Activated CD4-positive, alpha-beta T cell treated with anti-CD3 and anti-CD28 coated beads, Interleukin-2, amount 10 ng/mL, durations not matched to agents 24 days and 14 days (primary cell): ENCODE measurements at regions of chr11 and their contacts with region 1.

Region 1: DNA sequence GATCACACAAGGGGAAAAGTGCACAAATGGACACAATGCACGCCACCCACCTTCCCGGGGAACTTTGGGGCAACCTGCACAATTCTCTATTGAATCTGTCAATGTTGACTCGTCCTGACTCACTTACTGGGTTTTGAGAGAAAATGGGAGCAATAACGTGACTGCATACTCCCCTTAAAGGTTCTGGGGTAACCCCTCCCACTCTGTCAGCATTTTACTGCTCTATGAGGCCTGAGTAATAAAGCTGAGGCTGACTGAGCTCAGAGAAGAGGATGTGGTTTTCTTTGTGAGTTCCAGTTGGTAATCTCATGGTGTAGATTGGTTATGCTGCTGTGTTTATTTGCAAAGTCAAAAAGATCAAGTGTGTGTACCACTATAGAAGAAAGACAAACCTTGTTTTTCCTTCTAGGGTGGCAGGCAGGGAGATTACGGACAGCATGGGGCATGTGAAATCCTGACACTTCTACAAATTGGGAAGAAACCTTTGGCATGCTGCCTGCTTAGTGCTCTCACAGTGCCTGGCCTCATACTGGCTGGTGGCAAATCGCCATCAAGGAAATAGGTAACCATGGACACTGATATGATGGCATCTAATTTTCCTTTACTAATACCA is 16.1 kb upstream of the APOA1 start:
- DNase-seq: peak; percentile 92
- H3K4me3 Mint-ChIP-seq: peak overlapping the region; percentile 72
- H3K27ac Mint-ChIP-seq: peak overlapping the region; percentile 93
- H3K4me1 Mint-ChIP-seq: peaks cover 60% of the 10 kb centered on the region
- H3K27me3 Mint-ChIP-seq: no peaks in the 10 kb centered on the region

Region 2: GRCh38 chr11:116580799-116581198 is 272.8 kb before region 1 on chr11:
- intact Hi-C with region 1: no loop called
- DNase-seq: no peak
- H3K4me3 Mint-ChIP-seq: no peak overlapping the region
- H3K27ac Mint-ChIP-seq: no peak overlapping the region
- H3K4me1 Mint-ChIP-seq: no peaks in the 10 kb centered on the region
- H3K27me3 Mint-ChIP-seq: peaks cover 58% of the 10 kb centered on the region

Region 3: DNA sequence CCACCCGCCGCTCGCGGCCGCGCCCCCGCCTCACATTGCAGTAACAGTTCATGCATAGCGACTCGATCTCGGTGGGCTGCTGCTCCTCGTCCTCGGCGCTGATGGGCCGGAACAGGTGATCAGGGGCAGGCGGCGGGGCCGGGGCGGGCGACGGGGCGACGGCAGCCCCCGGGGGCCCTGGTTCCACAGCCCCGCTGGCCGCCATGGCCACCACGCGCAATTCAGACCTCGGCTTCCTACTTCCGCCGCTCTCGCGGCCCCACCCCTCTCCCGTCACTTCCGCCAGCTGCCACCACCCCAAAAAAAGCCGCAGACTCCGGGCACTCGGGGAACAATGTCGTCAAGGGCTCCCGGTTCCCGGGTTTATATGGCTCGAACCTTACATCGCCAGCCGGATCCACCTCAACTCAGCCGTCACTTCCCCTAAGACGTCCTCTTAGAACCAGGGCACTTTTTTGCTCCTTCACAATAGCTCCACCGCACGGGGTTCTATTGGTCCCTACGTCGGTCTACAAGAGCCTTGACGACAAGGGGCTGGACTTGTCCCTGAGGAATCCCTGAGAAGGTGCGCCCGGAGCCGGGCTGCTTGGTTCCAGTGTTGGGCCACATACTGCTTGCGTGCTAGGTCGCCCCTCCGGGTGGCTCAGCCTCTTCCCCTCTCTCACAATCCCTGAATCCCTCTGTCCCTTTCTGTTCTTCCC is 65.6 kb before region 1 on chr11 and contains the start of gene ZPR1:
- intact Hi-C with region 1: loop called (anchors 2 kb)
- DNase-seq: peak; percentile 97
- H3K4me3 Mint-ChIP-seq: peak within 1 kb of the TSS; percentile 97
- H3K27ac Mint-ChIP-seq: peak within 1 kb of the TSS; percentile 87
- H3K4me1 Mint-ChIP-seq: peaks cover 44% of the 10 kb centered on the region
- H3K27me3 Mint-ChIP-seq: peaks cover 2% of the 10 kb centered on the region
- total RNA-seq, gene ZPR1: 105 and 106 TPM in 2 replicates

Region 4: DNA sequence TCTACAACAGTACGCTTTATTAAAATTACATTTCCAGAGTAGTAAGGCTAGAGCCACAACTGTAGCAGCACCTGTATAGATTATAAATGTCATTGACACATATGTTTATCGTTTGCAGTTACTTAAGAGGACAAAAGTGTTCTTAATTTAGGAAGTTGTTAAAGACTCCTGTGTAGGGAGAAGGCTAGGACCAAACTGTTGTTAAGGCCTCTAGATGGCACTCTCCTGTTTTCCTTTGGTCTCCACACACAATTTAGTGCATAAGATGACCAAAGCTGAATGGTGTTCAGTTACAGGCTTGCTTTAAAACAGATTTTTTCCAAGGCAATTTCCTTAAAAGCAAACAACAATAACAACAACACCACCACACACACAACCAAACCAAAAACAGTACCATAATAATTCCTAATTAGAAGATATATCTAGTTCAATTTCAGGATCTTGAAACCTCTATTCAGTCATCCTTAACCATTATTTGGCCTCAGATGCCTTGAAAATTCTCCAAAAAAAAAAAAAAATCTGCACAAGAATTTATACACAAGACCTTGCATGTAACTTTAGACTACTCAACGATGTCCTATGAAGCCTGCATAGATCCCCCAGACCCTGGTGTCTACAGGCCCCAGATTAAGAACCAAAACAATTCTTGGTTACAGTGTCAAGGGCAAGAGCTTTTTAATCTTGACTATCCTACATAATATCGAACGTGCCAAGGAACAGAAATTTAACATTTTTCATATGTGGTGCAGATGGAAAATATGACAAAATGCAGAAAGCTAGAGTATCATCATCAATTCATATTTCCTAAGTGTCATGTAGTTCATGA is 26.4 kb after region 1 on chr11:
- intact Hi-C with region 1: loop called (anchors 2 kb)
- DNase-seq: peak; percentile 80
- H3K4me3 Mint-ChIP-seq: no peak overlapping the region
- H3K27ac Mint-ChIP-seq: no peak overlapping the region
- H3K4me1 Mint-ChIP-seq: peaks cover 15% of the 10 kb centered on the region
- H3K27me3 Mint-ChIP-seq: no peaks in the 10 kb centered on the region

Region 5: DNA sequence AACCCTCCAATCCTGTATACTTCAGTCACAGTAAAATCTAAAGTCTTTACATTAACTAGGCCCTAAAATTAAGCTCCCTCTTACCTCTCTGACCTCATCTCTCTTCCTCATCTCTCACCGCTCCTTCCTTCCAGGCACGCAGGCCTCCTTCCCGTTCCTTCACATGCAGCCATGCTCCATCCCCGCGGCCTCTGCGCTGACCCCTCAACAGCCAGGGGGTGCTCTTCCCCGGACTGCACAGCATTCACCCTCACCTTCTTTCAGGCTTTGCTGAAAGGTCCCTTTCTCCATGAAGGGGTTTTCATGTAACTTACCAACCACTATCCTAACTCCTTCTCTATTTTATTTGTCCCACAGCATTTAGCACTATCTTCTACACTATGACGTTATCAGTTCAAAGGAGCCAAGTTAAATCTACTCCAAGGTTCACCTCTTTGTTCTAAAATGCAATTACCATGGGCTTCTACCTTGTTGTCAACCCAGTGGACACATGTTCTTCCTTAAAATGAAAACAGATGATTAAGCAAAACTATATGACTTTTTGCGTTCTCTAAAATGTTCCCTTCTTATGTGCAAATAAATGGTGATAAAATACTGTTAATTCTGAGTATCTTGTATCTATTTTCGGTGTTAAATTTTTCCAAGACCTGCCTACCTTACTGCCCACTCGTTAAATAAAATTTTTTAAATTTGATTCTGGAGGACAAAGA is 41.6 kb after region 1 on chr11:
- intact Hi-C with region 1: no loop called
- DNase-seq: peak; percentile 63
- H3K4me3 Mint-ChIP-seq: no peak overlapping the region
- H3K27ac Mint-ChIP-seq: peak overlapping the region; percentile 25
- H3K4me1 Mint-ChIP-seq: peaks cover 7% of the 10 kb centered on the region
- H3K27me3 Mint-ChIP-seq: no peaks in the 10 kb centered on the region

Region 6: GRCh38 chr11:116986521-116987105 is 133.0 kb after region 1 on chr11:
- intact Hi-C with region 1: loop called (anchors 1 kb)
- DNase-seq: peak; percentile 76
- H3K4me3 Mint-ChIP-seq: peak overlapping the region; percentile 66
- H3K27ac Mint-ChIP-seq: peak overlapping the region; percentile 86
- H3K4me1 Mint-ChIP-seq: peaks cover 56% of the 10 kb centered on the region
- H3K27me3 Mint-ChIP-seq: no peaks in the 10 kb centered on the region

Region 7: GRCh38 chr11:117058761-117059261 is 205.2 kb after region 1 on chr11:
- intact Hi-C with region 1: loop called (anchors 2 kb)
- DNase-seq: no peak
- H3K4me3 Mint-ChIP-seq: no peak overlapping the region
- H3K27ac Mint-ChIP-seq: no peak overlapping the region
- H3K4me1 Mint-ChIP-seq: peaks cover 40% of the 10 kb centered on the region
- H3K27me3 Mint-ChIP-seq: no peaks in the 10 kb centered on the region

Region 8: GRCh38 chr11:117098269-117099232 is 245.0 kb after region 1 on chr11 and contains the start of gene SIK3:
- intact Hi-C with region 1: loop called (anchors 2 kb)
- DNase-seq: peak; percentile 98
- H3K4me3 Mint-ChIP-seq: peak within 1 kb of the TSS; percentile 98
- H3K27ac Mint-ChIP-seq: peak within 1 kb of the TSS; percentile 98
- H3K4me1 Mint-ChIP-seq: peaks cover 42% of the 10 kb centered on the region
- H3K27me3 Mint-ChIP-seq: peaks cover 2% of the 10 kb centered on the region
- total RNA-seq, gene SIK3: 38.4 and 38.7 TPM in 2 replicates

Region 9: GRCh38 chr11:117273550-117274289 is 420.2 kb after region 1 on chr11:
- intact Hi-C with region 1: no loop called
- DNase-seq: no peak
- H3K4me3 Mint-ChIP-seq: no peak overlapping the region
- H3K27ac Mint-ChIP-seq: no peak overlapping the region
- H3K4me1 Mint-ChIP-seq: no peaks in the 10 kb centered on the region
- H3K27me3 Mint-ChIP-seq: no peaks in the 10 kb centered on the region